SK-N-SH (cell line): ENCODE measurements at regions of chr14 and their contacts with region 1.

Region 1: DNA sequence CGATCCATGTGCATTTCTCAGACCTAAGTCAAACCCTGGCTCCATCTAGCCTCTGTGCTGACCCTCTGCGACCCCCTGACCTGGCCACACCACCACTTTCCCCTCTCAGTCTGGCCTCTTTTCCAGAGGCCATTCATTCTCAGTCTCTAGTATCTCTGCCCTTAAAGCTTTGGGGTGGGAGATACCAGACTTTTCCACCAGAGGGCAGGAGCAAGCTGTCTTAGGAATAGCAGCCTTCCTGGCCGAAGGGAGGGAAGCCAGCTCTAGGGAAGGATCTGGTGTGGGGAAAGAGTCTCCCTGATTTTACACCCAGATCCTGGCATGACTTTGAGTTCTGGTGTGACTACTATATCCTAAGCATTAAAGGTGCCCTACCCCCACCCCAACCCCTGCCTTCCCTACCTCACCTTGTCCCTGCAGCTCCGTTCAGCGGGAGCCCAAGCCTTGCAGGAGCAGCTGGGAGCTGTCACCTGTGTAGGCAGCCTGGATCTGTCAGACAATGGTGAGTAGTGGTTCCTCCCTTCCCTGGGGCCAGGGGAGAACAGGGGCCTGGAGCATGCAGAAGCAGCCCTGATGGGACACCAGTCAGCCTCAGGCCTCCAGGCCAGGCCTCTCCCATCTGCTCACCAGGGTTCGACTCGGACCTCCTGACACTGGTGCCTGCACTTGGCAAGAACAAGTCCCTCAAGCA is 6.6 kb downstream of the CARMIL3 start:
- DNase-seq: peak; percentile 91
- H3K4me3 ChIP-seq: no peak overlapping the region; a peak in 1 of 4 replicates
- H3K27ac ChIP-seq: no peak overlapping the region
- H3K4me1 ChIP-seq: peaks cover 0 to 3% of the 10 kb centered on the region in 2 experiments; a peak in 1 of 4 replicates
- H3K27me3 ChIP-seq: no peaks in the 10 kb centered on the region
- CTCF ChIP-seq: peak; percentile 84
- EP300 ChIP-seq: no peak
- RAD21 ChIP-seq: peak; percentile 99

Region 2: DNA sequence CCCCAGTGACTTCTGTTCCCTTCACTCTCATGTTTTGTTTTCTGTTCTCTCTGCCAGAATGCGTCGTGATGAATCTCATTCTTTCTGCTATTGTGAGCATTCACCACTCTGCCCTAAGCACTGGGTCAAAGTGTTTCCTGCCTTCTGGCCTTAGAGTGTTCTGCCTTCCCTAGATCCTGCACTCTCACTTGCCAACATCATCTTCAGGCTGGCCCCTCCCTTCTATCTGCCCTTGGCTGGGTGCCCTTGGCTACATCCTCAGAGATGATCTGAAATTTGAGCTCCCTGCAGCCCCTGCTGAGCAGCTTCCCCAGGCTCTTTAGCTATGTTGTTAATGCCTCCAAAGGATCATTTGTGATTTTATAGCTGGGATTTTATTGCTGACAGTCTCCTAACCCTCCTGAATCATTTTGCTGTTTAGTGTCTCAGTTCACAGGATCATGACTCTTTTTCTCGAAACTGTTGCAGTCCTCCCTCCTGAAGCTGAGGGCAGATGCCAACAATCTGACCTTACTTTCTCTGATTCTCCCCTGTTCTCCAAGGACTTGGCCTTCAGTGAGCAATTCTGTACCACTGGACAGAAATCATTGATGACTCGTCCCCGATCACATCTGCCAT is 417.8 kb before region 1 on chr14:
- CTCF ChIA-PET with region 1: no interaction called
- POLR2A ChIA-PET with region 1: no interaction called
- DNase-seq: peak; percentile 24
- H3K4me3 ChIP-seq: no peak overlapping the region
- H3K27ac ChIP-seq: no peak overlapping the region
- H3K4me1 ChIP-seq: peaks cover 12 to 15% of the 10 kb centered on the region in 2 experiments; a peak in 2 of 4 replicates
- H3K27me3 ChIP-seq: no peaks in the 10 kb centered on the region
- CTCF ChIP-seq: no peak
- EP300 ChIP-seq: no peak
- RAD21 ChIP-seq: no peak

Region 3: DNA sequence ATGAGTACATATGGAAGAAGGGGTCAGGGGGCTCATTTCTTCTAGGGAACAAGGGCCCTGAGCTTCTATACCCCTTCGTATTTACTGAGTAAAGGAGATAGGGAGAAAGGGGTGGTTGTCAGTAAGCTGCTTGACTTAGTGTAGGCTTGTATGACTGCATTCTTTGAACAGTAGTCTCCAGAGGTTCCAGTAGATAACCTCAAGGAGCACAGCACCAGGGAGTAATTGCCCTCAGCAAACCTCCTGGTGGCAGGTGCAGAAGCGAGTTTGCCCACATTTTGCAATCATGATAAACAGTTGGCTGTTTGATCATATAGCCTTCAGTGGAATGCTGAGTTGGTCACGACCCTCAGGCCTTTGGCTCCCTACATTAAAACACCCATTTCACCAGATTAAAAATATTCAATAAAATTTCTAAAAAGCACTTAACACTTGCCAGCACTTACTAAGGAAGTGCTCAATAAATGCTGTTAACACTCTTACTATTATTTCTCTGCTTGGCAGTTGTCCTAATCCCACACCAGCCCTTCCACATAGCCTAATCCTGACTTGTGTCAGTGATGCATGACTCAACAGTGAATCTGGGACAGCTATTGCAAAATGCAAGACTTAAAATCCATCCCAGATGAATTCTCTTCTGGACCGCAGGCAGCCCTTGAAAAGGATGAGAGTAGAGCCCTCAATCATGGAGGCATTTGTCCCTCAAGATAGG is 73.4 kb before region 1 on chr14:
- CTCF ChIA-PET with region 1: no interaction called
- POLR2A ChIA-PET with region 1: no interaction called
- DNase-seq: no peak
- H3K4me3 ChIP-seq: no peak overlapping the region
- H3K27ac ChIP-seq: no peak overlapping the region
- H3K4me1 ChIP-seq: no peaks in the 10 kb centered on the region
- H3K27me3 ChIP-seq: no peaks in the 10 kb centered on the region
- CTCF ChIP-seq: no peak
- EP300 ChIP-seq: no peak
- RAD21 ChIP-seq: no peak

Region 4: DNA sequence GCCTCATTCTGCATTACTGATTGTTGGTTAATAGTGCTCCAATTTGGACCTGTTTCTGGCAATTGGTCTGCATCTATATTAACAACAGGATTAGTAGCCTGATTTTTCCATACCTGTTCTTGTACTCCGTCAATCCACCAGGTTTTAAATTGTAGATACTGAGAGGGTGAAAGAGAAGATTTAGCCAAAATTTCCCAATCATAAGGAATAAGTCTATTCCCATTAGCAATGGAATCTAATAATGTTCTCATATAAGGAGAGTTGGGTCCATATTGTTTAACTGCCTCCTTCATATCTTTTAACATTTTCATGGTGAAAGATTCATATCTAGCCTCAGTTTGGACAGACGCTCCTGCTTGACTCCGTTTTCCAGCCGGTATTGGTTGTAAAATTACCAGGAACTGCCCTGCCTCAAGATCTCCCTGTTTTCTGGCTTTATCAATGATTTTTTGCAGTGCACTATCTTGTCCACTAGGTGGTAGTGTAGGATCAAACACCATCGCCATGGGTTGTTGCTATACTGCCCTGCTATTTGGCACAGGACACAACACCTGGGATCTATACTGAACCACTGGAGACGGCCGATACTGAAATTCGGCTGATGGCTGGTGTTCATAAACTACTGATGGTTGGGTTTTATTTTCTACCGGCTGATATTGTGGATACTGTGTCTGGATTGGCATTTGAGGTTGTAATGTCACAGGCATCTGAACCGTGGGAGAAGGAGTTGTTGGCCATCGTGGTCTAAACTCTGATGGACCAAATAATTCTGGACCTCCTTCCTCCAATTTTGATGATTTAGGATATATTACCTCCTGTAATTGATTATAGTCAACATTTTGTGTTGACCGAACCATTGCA is 44.5 kb before region 1 on chr14:
- CTCF ChIA-PET with region 1: interaction called, 11 read pairs
- POLR2A ChIA-PET with region 1: no interaction called
- DNase-seq: peak; percentile 78
- H3K4me3 ChIP-seq: no peak overlapping the region; a peak in 1 of 4 replicates
- H3K27ac ChIP-seq: no peak overlapping the region
- H3K4me1 ChIP-seq: peaks cover 0 to 2% of the 10 kb centered on the region in 2 experiments; a peak in 1 of 4 replicates
- H3K27me3 ChIP-seq: no peaks in the 10 kb centered on the region
- CTCF ChIP-seq: peak; percentile 84
- EP300 ChIP-seq: no peak
- RAD21 ChIP-seq: peak; percentile 97

Region 5: DNA sequence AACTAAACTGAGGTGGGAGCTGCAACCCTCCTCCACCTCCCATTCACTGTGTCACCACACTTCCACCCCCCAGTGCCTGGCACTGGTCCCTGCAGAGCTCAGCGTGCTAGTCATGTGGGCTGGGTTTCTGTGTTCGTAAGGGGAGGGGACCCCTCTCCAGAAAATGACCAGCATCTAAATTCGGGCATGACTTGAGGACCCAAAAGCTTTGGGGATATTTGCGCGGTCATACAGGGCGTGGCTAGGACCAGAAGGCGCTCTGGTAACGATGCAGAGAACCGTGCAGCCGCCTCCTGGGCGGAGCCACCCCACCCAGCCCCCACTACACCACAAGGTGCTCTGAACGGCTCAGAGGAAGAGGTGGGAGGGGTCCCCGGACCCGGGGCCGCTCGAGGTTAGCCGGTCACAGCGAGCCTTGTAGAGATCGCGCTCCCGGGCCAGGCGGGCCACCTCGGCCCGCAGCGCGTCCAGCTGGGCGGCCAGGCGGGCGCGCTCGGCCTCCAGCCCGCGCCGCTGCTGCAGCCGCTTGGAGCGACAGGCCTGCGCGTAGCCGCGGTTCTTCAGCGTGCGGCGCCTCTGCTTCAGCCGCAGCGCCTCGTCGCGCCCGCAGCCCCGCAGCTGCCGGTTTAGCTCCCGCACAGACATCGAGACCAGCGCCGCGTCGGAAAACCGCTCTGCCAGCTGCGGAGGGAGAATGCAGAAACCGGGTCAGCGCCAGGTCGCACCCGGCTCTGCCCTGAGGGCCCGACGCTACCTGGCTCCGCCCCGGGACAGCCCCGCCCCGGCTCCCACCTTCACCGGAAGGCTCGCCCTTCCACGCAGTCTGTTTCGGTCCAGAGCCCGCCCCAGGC is 22.7 kb after region 1 on chr14:
- CTCF ChIA-PET with region 1: interaction called, 284 read pairs
- POLR2A ChIA-PET with region 1: interaction called, 27 read pairs
- DNase-seq: peak; percentile 85
- H3K4me3 ChIP-seq: peak overlapping the region; percentile 57 to 59
- H3K27ac ChIP-seq: peak overlapping the region in 1 of 2 experiments; percentile 73; a peak in 2 of 4 replicates
- H3K4me1 ChIP-seq: peaks cover 0 to 30% of the 10 kb centered on the region in 2 experiments; a peak in 1 of 4 replicates
- H3K27me3 ChIP-seq: peaks cover 5% of the 10 kb centered on the region; the same call in 1 of the 2 replicates
- CTCF ChIP-seq: no peak
- EP300 ChIP-seq: no peak
- RAD21 ChIP-seq: no peak

Region 6: DNA sequence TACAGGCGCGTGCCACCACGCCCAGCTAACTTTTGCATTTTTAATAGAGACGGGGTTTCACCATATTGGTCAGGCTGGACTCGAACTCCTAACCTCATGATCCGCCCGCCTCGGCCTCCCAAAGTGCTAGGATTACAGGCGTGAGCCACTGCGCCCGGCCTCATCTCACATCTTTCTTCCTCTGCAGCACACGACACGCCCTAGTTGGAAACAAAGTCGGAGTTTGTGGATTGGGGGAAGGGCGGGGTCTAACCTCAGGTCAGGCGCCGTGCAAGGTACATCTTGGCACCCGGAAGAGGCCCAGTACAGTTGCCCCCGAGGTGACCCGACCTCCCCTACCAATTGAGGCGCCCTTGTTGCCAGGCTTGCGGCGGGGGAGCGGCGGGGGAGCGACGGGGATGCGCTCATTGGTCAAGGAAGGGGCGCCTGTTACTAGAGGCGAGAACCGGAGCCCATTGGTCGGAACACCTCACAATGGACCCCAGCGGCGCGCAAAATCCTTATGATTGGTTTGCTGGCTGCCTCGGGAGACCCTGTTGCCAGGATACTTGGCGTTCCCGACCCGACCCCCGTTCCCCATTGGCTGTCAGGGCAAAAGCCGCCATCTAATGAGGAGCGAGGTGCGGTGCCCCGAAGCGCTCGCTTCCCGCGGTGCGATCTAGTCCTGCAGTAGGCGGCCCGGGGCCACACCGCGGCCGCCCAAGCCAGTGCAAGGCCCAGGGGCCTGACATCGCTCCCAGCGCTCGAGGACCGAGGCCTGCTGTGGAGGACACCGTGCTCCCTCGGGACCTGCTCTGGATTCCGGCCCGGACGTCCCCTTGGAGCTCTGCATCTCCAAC is 113.2 kb after region 1 on chr14 and contains the start of gene REC8:
- CTCF ChIA-PET with region 1: interaction called, 10 read pairs
- POLR2A ChIA-PET with region 1: no interaction called
- DNase-seq: peak; percentile 97
- H3K4me3 ChIP-seq: peak within 1 kb of the TSS; percentile 46 to 54; a peak in 3 of 4 replicates
- H3K27ac ChIP-seq: peak within 1 kb of the TSS in 1 of 2 experiments; percentile 90; a peak in 2 of 4 replicates
- H3K4me1 ChIP-seq: peaks cover 0 to 11% of the 10 kb centered on the region in 2 experiments; a peak in 1 of 4 replicates
- H3K27me3 ChIP-seq: no peaks in the 10 kb centered on the region
- CTCF ChIP-seq: no peak
- EP300 ChIP-seq: peak in 1 of 2 experiments; percentile 52; a peak in 1 of 4 replicates
- RAD21 ChIP-seq: no peak
- polyA plus RNA-seq, gene REC8: 13.1 and 23.2 TPM in 2 replicates